Activated T-helper 1 cell treated with anti-CD3 and anti-CD28 coated beads, Interleukin-12 subunit alpha, Interleukin-12 subunit beta, Interleukin-2, Interleukin-4 antibody, amounts not matched to agents 30 ng/mL and 10 ng/mL and 1 ng/mL, durations not matched to agents 14 hours and 24 hours and 36 hours (primary cell): ENCODE measurements at regions of chr15 and their contacts with region 1.

Region 1: GRCh38 chr15:60592371-60593169 is 113.6 kb upstream of the ICE2 start:
- DNase-seq: peak; percentile 84
- H3K4me3 Mint-ChIP-seq: peak overlapping the region; percentile 83
- H3K27ac Mint-ChIP-seq: peak overlapping the region; percentile 68
- H3K4me1 Mint-ChIP-seq: peaks cover 69% of the 10 kb centered on the region
- H3K27me3 Mint-ChIP-seq: peaks cover 2% of the 10 kb centered on the region

Region 2: GRCh38 chr15:60840306-60840702 is 247.7 kb after region 1 on chr15:
- intact Hi-C with region 1: loop called (anchors 2 kb)
- DNase-seq: no peak
- H3K4me3 Mint-ChIP-seq: peak overlapping the region; percentile 49
- H3K27ac Mint-ChIP-seq: peak overlapping the region; percentile 37
- H3K4me1 Mint-ChIP-seq: peaks cover 66% of the 10 kb centered on the region
- H3K27me3 Mint-ChIP-seq: peaks cover 17% of the 10 kb centered on the region

Region 3: GRCh38 chr15:60916679-60917460 is 324.3 kb after region 1 on chr15:
- intact Hi-C with region 1: loop called (anchors 1 kb)
- DNase-seq: peak; percentile 80
- H3K4me3 Mint-ChIP-seq: peak overlapping the region; percentile 17
- H3K27ac Mint-ChIP-seq: peak overlapping the region; percentile 64
- H3K4me1 Mint-ChIP-seq: peaks cover 32% of the 10 kb centered on the region
- H3K27me3 Mint-ChIP-seq: peaks cover 2% of the 10 kb centered on the region

Region 4: GRCh38 chr15:61138156-61138555 is 545.6 kb after region 1 on chr15:
- intact Hi-C with region 1: no loop called
- DNase-seq: no peak
- H3K4me3 Mint-ChIP-seq: no peak overlapping the region
- H3K27ac Mint-ChIP-seq: no peak overlapping the region
- H3K4me1 Mint-ChIP-seq: peaks cover 8% of the 10 kb centered on the region
- H3K27me3 Mint-ChIP-seq: peaks cover 10% of the 10 kb centered on the region

Region 5: DNA sequence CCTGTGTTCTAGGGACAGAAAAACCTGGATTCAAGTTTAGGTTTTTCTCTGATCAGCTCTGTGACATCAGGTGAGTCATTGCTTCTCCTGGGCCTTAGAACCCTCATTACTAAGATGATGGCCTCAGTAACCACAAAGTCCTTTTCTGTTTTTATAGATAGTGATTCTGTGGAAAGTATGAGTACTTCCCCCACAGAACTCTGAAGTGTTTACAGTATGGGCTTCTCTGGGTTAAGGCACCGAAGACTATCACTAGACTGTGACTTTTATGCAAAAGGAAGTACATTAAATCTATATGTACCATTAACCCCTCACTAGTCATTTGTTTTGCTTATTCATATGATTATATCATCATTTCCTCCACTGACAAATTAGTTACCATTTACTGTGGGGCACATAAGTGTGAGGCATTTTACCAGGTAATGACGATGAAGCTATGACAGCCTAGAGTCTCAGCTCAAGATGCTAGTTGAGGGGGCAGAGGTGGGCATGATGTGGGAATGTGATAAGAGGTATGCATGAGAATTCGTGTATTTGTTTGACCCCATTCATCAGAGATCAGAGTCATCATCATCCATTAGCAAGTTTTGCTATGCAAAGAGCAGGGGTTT is 651.5 kb after region 1 on chr15:
- intact Hi-C with region 1: loop called (anchors 5 kb)
- DNase-seq: no peak
- H3K4me3 Mint-ChIP-seq: no peak overlapping the region
- H3K27ac Mint-ChIP-seq: peak overlapping the region; percentile 59
- H3K4me1 Mint-ChIP-seq: peaks cover 5% of the 10 kb centered on the region
- H3K27me3 Mint-ChIP-seq: peaks cover 15% of the 10 kb centered on the region